Transverse colon (tissue), 4 donors: ENCODE measurements at regions of chr7 and their contacts with region 1.

Region 1: DNA sequence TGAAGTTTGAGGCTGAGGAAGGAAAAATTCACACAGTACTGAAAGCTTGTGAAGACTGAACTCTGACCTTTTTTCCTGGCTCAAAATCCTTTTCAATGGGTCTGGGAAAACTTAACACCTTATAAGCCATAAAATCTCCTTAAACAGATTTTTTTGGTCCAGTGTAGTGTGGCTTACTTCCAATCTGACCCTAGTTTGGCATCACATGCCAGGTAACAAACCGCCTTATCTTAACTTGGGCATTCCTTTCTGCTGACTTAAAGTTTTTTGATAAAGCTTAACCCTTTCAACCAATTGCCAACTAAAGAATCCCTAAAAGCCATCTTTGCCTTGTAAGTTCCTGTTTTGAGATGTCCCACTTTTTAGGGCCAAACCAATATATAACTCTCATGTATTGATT is 13.2 kb upstream of the ITPRID1 start:
- DNase-seq: no peak
- H3K4me3 ChIP-seq: no peak overlapping the region
- H3K27ac ChIP-seq: no peak overlapping the region
- H3K4me1 ChIP-seq: no peaks in the 10 kb centered on the region
- H3K27me3 ChIP-seq: no peaks in the 10 kb centered on the region
- CTCF ChIP-seq: no peak
- EP300 ChIP-seq: no peak
- POLR2A ChIP-seq: no peak

Region 2: DNA sequence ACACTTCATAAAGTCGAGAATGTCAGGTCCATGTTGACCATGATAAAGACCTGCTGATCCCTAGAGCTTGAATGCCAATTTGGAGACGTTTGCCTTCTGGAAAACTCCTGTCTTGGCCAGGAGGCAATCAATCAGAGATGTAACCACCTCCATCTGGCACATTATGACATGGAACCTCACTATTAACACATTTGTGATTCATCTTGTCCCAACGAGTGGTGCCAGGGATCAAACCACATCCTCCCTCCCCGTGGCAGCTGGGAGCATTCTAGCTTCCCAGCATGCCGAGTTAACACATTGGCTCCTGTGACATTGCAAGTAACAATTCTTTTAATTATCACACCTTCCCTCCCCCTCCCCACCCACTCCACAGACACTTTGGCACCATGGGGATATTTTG is 102.4 kb after region 1 on chr7:
- in situ Hi-C with region 1: loop called in 1 of 4 experiments (anchors 25 kb)
- intact Hi-C with region 1: no loop called
- DNase-seq: no peak
- H3K4me3 ChIP-seq: no peak overlapping the region
- H3K27ac ChIP-seq: no peak overlapping the region
- H3K4me1 ChIP-seq: no peaks in the 10 kb centered on the region
- H3K27me3 ChIP-seq: no peaks in the 10 kb centered on the region
- CTCF ChIP-seq: no peak
- EP300 ChIP-seq: no peak
- POLR2A ChIP-seq: no peak

Region 3: GRCh38 chr7:32093415-32094408 is 593.1 kb after region 1 on chr7:
- in situ Hi-C with region 1: no loop called
- intact Hi-C with region 1: no loop called
- DNase-seq: no peak
- H3K4me3 ChIP-seq: no peak overlapping the region
- H3K27ac ChIP-seq: no peak overlapping the region
- H3K4me1 ChIP-seq: no peaks in the 10 kb centered on the region
- H3K27me3 ChIP-seq: no peaks in the 10 kb centered on the region
- CTCF ChIP-seq: no peak
- EP300 ChIP-seq: no peak
- POLR2A ChIP-seq: no peak